ENCODE measurements at regions of chr3 and their contacts with region 1.

Region 1: DNA sequence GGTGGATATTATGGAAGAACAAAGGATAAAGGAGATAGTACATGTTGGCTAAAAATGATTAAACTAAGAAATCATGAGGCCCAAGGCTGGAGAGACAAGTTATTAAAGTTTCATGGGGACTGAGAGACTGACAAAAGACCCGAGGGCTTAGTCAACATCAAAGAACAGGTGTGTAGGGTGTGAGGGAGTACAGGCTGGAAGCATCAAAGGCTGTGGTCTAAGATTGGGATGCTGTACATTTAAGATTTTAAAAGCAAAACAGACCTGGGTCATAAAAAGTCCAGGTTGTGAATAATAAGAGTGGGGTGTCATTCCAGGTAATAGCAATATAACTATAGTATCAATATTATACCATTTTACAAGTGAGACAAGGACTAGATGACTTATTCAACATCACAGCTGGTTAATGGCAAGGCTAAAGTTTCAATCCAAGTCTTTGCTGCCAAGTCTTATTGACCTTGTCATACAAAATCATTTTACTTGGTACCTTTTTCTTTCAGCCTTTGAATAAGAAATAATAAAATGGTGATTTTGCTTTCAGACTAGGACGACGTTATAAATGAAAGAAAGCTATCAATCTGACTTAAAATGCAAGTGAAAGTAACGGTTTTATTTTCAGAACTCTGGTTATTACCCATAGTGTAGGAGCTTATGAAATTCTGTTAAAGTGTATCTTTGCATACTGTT is 211.6 kb downstream of the TNIK start:
- DNase-seq: no peak
- ATAC-seq: no peak
- H3K4me3 ChIP-seq: no peak overlapping the region
- H3K27ac ChIP-seq: no peak overlapping the region
- H3K4me1 ChIP-seq: no peaks in the 10 kb centered on the region
- H3K27me3 ChIP-seq: peaks cover 6% of the 10 kb centered on the region; the same call in 1 of the 2 replicates
- CTCF ChIP-seq: no peak

Region 2: DNA sequence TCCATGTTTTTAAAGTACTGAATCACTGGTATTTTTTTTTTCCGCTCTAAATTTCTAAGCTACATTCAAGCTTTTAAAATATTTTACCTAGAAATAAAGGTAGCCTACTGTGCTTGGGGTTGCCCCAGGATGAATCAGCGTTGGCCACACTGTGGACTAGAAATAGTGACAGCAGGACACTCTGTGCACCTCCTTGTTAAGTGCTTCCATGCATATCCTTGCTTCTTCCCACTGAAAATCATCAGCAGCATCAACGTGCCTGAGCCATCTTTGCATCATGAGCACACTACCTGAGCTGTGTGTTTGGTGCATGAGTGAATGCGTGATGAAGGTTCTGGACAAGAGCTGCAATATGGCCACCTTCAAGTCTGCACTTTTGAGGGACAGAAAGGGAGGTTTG is 80.0 kb before region 1 on chr3:
- CTCF ChIA-PET with region 1: interaction called, 11 read pairs
- POLR2A ChIA-PET with region 1: no interaction called
- in situ Hi-C with region 1: no loop called
- intact Hi-C with region 1: no loop called
- DNase-seq: no peak
- ATAC-seq: no peak
- H3K4me3 ChIP-seq: no peak overlapping the region
- H3K27ac ChIP-seq: no peak overlapping the region
- H3K4me1 ChIP-seq: no peaks in the 10 kb centered on the region
- H3K27me3 ChIP-seq: no peaks in the 10 kb centered on the region
- CTCF ChIP-seq: peak; percentile 14; the same call in 1 of the 2 replicates